ENCODE measurements at regions of chr1 and their contacts with region 1.

Region 1: DNA sequence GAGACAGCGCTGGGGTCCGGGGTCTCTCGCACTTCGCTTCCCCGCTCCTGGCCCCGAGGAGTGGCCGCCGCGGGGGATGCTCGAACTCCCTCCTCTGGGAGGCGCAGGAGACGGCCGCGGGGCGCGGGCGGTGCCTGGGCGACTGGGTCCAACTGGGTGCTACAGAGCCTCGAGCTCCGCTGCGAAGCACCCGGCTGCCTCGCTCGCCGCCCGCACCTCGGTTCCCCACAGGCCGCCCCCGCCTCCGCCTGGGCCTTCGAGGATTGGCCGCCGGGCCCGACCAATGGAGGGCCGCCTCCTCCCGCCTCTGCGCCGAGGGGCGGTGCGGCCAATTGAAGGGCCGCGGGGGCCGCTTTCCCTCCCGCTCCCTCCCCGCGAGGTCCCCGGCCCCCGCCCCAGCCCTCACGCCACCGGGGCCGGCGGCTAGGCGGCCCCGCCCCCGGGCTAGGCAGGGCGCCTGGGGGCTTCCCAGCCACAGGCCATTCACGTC is at the start of gene CNN3:
- DNase-seq: peak; percentile 87
- ATAC-seq: peak; percentile 79
- H3K4me3 ChIP-seq: peak within 1 kb of the TSS; percentile 89
- H3K27ac ChIP-seq: peak within 1 kb of the TSS; percentile 84
- H3K4me1 ChIP-seq: peaks cover 25% of the 10 kb centered on the region
- H3K27me3 ChIP-seq: no peaks in the 10 kb centered on the region
- CTCF ChIP-seq: no peak
- total RNA-seq, gene CNN3: 231 and 323 TPM in 2 replicates

Region 2: DNA sequence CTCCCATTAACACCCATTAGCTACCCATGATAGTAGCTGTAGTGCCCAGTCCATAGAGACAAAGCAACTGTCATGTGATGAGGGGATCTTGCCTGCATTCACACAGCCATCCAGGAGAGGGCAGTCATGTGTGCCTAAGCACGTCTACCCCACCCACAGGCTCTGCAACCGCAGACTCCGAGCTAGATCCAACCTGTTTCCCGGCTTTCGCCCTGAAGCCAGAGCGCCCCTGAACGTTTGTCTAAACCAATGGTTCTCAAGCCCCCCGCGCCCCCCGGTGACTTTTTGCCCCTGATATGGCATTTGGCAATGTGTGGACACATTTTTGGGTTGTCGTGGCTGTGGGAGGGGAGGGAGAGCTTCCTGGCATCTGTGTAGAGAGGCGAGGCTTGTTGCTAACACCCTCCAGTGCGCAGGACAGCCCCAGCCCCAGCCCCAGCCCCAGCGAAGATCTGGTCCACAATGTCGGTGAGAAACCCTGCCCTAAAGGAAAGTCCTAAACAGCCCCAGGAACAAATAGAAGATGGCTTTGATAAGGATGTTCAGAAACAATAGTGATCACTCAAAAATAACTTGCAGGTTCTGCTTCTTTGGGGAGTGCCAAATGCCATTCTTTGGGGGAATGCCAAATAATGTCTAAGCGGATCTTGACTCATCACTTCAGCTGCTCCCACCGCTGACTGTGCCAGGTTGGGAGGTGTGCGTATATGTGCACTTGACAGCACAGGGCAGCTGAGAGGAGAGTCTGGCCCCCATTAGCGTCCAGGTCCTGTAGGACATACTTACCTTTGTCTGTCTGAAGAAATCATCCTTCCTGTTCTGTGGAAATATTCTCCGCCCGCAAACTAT is 72.3 kb before region 1 on chr1:
- CTCF ChIA-PET with region 1: interaction called, 4 read pairs
- POLR2A ChIA-PET with region 1: interaction called, 4 read pairs
- intact Hi-C with region 1: loop called (anchors 1 kb)
- DNase-seq: peak; percentile 99
- ATAC-seq: peak; percentile 84
- H3K4me3 ChIP-seq: peak overlapping the region; percentile 65
- H3K27ac ChIP-seq: peak overlapping the region; percentile 97
- H3K4me1 ChIP-seq: peaks cover 60% of the 10 kb centered on the region
- H3K27me3 ChIP-seq: no peaks in the 10 kb centered on the region
- CTCF ChIP-seq: peak; percentile 92

Region 3: DNA sequence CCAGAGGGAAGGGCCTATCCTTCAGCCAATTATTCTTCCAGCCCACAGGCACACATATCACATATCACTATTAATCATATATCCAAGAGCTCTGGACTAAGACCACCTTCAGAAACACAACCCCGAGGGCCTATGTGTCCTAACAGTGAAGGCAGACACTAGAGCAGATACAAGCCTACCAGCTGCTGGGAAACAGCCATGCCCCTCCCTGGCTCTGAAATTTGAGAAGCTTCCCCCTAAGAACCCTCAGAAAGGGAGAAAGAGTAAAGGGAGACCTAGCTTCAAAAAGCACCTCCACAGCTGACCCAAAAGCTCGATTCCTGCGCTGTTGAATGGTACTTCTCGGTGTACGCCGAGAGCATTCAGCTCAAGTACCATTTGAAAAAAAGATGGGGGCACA is 17.5 kb before region 1 on chr1:
- CTCF ChIA-PET with region 1: no interaction called
- POLR2A ChIA-PET with region 1: interaction called, 14 read pairs
- intact Hi-C with region 1: no loop called
- DNase-seq: no peak
- ATAC-seq: no peak
- H3K4me3 ChIP-seq: no peak overlapping the region
- H3K27ac ChIP-seq: no peak overlapping the region
- H3K4me1 ChIP-seq: peaks cover 7% of the 10 kb centered on the region
- H3K27me3 ChIP-seq: no peaks in the 10 kb centered on the region
- CTCF ChIP-seq: no peak

Region 4: DNA sequence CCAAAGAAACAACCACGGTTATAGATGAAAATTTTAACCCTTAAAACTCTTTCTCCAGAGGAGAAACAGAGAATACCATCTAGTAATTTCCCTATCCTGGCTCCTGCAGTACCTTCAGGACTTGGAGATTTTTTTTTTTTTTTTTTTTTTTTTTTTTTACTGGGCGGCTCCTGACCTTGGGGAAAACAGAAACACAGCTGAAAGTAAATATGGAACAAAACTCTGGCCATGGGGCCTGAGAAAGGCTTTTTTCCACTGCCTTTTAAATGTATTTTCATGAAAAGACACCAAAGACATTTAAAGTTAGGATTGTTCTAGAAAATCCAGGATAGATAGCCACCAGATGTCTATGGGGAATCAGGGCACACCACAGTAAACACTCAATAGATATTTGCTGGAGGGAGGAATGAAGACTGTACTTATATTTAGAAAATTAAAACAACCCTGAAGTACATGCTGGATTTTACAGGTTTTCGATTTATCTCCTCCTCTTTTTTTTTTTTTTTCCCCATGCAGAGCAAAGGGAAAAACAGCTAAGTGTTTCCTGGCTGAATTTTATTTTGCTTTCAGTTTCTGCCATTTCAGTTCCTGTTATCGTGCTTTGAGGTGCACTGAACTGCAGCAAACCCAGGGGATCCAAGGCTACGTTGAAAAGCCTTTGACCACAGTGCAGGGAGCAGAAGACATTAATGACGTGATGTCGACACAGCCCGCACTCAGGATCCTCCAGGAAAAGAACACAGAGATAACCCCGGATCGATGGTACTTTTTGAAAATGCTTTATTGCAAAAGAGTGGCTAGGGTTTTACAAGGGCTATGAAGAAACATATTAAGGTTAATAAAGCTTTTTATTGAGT is 35.7 kb after region 1 on chr1:
- CTCF ChIA-PET with region 1: no interaction called
- POLR2A ChIA-PET with region 1: no interaction called
- intact Hi-C with region 1: loop called (anchors 2 kb)
- DNase-seq: peak; percentile 23
- ATAC-seq: peak; percentile 88
- H3K4me3 ChIP-seq: peak overlapping the region; percentile 64
- H3K27ac ChIP-seq: 0 out of 2 replicates have a peak overlapping the region, but pooled peaks have one; percentile 2
- H3K4me1 ChIP-seq: peaks cover 10% of the 10 kb centered on the region; the same call in 1 of the 2 replicates
- H3K27me3 ChIP-seq: no peaks in the 10 kb centered on the region
- CTCF ChIP-seq: no peak